Activated B cell treated with CpG ODN at 0.5 μM for 24 hours (primary cell): ENCODE measurements at regions of chr3 and their contacts with region 1.

Region 1: DNA sequence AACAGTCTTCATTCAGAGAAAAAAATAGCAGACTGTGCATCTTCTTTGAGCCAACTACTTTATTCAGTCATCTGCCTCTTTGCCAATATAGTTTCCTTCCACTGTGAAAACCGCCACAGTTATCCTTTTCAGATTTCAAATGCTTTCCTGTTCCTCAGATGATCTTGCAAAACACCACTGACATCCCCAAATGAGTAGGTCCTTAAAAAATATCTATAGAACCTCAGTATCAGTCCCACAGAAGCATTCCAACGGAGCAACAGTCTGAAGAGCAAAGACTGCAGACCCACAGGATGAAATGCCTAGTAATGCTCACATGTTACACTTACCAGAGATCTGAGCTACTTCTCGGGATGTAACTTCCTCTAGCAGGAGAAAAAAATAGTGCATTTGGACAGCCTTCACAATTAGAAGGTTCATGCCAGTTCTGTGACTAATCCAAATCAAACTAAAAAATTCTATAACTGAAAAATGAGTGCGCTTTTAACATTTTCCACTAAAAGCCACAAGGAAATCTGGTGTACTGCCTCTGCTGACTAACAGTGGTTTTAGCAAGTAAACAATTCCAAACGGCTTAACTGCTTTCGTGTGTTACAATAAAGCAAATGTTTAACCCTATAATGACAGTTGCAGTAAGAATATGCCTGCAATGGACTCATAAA is at the start of gene ANKRD28:
- DNase-seq: no peak
- ATAC-seq: peak; percentile 20
- H3K4me3 Mint-ChIP-seq: peak within 1 kb of the TSS; percentile 68
- H3K27ac Mint-ChIP-seq: peak within 1 kb of the TSS; percentile 82
- H3K4me1 Mint-ChIP-seq: peaks cover 66% of the 10 kb centered on the region
- H3K27me3 Mint-ChIP-seq: no peaks in the 10 kb centered on the region
- CTCF ChIP-seq: no peak
- total RNA-seq, gene ANKRD28: 27.5 and 29.9 TPM in 2 replicates

Region 2: GRCh38 chr3:15859507-15860013 is 61.8 kb after region 1 on chr3:
- CTCF ChIA-PET with region 1: no interaction called
- POLR2A ChIA-PET with region 1: no interaction called
- intact Hi-C with region 1: loop called (anchors 5 kb)
- DNase-seq: peak; percentile 77
- ATAC-seq: peak; percentile 77
- H3K4me3 Mint-ChIP-seq: peak overlapping the region; percentile 99
- H3K27ac Mint-ChIP-seq: peak overlapping the region; percentile 95
- H3K4me1 Mint-ChIP-seq: peaks cover 27% of the 10 kb centered on the region
- H3K27me3 Mint-ChIP-seq: no peaks in the 10 kb centered on the region
- CTCF ChIP-seq: no peak

Region 3: GRCh38 chr3:16090024-16090423 is 292.3 kb after region 1 on chr3:
- CTCF ChIA-PET with region 1: no interaction called
- POLR2A ChIA-PET with region 1: no interaction called
- intact Hi-C with region 1: no loop called
- DNase-seq: no peak
- ATAC-seq: no peak
- H3K4me3 Mint-ChIP-seq: no peak overlapping the region
- H3K27ac Mint-ChIP-seq: no peak overlapping the region
- H3K4me1 Mint-ChIP-seq: no peaks in the 10 kb centered on the region
- H3K27me3 Mint-ChIP-seq: peaks cover 8% of the 10 kb centered on the region
- CTCF ChIP-seq: no peak